CD4-positive, alpha-beta memory T cell (primary cell): ENCODE measurements at regions of chr9 and their contacts with region 1.

Region 1: GRCh38 chr9:20426019-20426418 is 196.3 kb downstream of the MLLT3 start:
- DNase-seq: no peak
- H3K4me3 ChIP-seq: no peak overlapping the region
- H3K4me3 Mint-ChIP-seq: no peak overlapping the region
- H3K27ac ChIP-seq: no peak overlapping the region
- H3K27ac Mint-ChIP-seq: no peak overlapping the region
- H3K4me1 ChIP-seq: no peaks in the 10 kb centered on the region
- H3K4me1 Mint-ChIP-seq: peaks cover 12 to 18% (median 13%) of the 10 kb centered on the region in 4 donors
- H3K27me3 ChIP-seq: no peaks in the 10 kb centered on the region
- H3K27me3 Mint-ChIP-seq: no peaks in the 10 kb centered on the region

Region 2: GRCh38 chr9:20319641-20320337 is 106.2 kb before region 1 on chr9:
- CTCF ChIA-PET with region 1: no interaction called
- POLR2A ChIA-PET with region 1: no interaction called
- intact Hi-C with region 1: no loop called
- DNase-seq: peak in 2 of 5 donors; percentile 15 to 56
- H3K4me3 ChIP-seq: no peak overlapping the region
- H3K4me3 Mint-ChIP-seq: peak overlapping the region in 4 of 8 donors; percentile 20 to 53 (median 44)
- H3K27ac ChIP-seq: no peak overlapping the region
- H3K27ac Mint-ChIP-seq: peak overlapping the region; percentile 29 to 81 (median 61)
- H3K4me1 ChIP-seq: peaks cover 77% of the 10 kb centered on the region
- H3K4me1 Mint-ChIP-seq: peaks cover 49 to 92% (median 84%) of the 10 kb centered on the region in 4 donors
- H3K27me3 ChIP-seq: no peaks in the 10 kb centered on the region
- H3K27me3 Mint-ChIP-seq: no peaks in the 10 kb centered on the region

Region 3: GRCh38 chr9:20361656-20362570 is 64.1 kb before region 1 on chr9:
- CTCF ChIA-PET with region 1: interaction called, 3 read pairs
- POLR2A ChIA-PET with region 1: no interaction called
- intact Hi-C with region 1: loop called (anchors 10 kb)
- DNase-seq: no peak
- H3K4me3 ChIP-seq: no peak overlapping the region
- H3K4me3 Mint-ChIP-seq: peak overlapping the region in 4 of 8 donors; percentile 5 to 80 (median 39)
- H3K27ac ChIP-seq: no peak overlapping the region
- H3K27ac Mint-ChIP-seq: peak overlapping the region; percentile 51 to 87 (median 74)
- H3K4me1 ChIP-seq: peaks cover 20% of the 10 kb centered on the region
- H3K4me1 Mint-ChIP-seq: peaks cover 20 to 62% (median 30%) of the 10 kb centered on the region in 4 donors
- H3K27me3 ChIP-seq: no peaks in the 10 kb centered on the region
- H3K27me3 Mint-ChIP-seq: no peaks in the 10 kb centered on the region

Region 4: DNA sequence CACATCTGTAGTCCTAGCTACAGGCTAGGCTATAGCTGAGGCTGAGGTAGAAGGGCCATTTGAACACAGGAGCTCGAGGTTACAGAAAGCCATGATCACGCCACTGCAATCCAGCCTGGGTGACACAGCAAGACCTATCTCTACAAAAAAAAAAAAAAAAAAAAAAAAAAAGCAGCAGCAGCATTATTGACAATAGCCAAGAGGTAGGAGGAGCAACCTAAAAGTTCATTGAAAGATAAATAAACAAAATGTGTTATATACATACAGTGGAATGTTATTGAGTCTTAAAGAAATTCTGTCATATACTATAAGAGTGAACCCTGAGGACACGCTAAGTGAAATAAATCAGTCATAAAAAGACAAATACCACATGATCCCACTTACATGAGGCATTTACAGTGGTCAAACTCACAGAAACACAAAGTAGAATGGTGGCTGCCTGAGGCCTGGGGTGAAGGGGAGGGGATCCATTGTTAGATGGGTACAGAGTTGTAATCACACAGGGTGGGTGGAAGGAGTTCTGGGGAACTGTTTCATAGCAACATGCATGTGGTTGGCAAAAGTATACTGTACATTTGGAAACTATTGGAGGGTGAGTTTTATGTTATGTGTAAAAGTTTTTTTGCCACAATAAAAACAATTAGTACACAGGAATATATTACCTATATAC is 119.1 kb after region 1 on chr9:
- CTCF ChIA-PET with region 1: no interaction called
- POLR2A ChIA-PET with region 1: no interaction called
- intact Hi-C with region 1: no loop called
- DNase-seq: no peak
- H3K4me3 ChIP-seq: no peak overlapping the region
- H3K4me3 Mint-ChIP-seq: no peak overlapping the region
- H3K27ac ChIP-seq: no peak overlapping the region
- H3K27ac Mint-ChIP-seq: no peak overlapping the region
- H3K4me1 ChIP-seq: no peaks in the 10 kb centered on the region
- H3K4me1 Mint-ChIP-seq: peaks cover 20 to 28% (median 26%) of the 10 kb centered on the region in 4 donors
- H3K27me3 ChIP-seq: no peaks in the 10 kb centered on the region
- H3K27me3 Mint-ChIP-seq: no peaks in the 10 kb centered on the region